ENCODE measurements at regions of chr12 and their contacts with region 1.

Region 1: DNA sequence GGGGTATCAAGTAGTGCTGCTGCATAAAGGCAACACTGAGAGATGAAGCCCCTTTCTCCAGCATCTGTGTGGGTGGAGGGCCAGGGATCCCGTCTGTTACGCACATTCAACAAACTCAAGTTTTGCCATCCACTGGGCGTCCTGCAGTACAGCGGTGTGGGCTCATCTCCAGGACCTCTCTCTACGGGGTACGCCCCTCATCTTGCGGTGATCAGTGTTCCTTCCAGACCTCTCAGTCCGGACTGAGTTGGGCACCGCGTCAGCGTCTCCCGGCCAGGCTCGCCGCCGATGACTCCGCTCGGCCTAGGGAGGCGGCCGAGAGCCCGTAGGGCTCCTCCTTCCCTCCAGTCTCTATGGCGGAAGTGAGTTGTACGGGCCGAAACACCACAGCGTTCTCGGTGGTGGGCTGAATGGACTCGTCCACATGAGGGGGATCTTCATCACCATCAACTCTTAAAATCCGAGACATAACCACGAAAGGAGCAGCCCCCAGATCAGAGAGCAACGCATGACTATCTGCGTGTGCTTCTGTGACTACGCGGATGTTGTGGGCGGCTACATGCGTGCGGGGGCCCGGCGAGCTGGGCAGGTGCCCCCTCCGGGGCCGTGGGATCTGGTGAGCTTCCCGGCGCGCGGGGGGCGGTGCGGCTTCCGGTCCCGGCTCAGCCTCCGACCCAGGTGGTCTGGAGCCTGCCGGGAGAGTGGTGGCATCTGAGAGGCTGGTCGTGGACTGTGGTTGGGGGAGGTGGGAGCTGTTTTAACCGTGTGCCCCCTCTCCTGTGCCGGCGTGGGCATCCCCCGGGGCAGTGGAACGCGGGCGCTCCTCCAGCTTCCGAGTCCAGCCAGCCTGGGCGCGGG is at the start of gene ATG101:
- DNase-seq: peak; percentile 94
- H3K4me3 ChIP-seq: peak within 1 kb of the TSS; percentile 100
- H3K27ac ChIP-seq: peak within 1 kb of the TSS; percentile 93
- H3K27me3 ChIP-seq: no peaks in the 10 kb centered on the region
- CTCF ChIP-seq: peak; percentile 68
- polyA plus RNA-seq, gene ATG101: 97.3 and 112 TPM in 2 replicates

Region 2: GRCh38 chr12:52032804-52033502 is 36.6 kb before region 1 on chr12:
- CTCF ChIA-PET with region 1: interaction called, 624 read pairs
- POLR2A ChIA-PET with region 1: interaction called, 6 read pairs
- DNase-seq: peak; percentile 88
- H3K4me3 ChIP-seq: peak overlapping the region; percentile 53
- H3K27ac ChIP-seq: peak overlapping the region; percentile 82
- H3K27me3 ChIP-seq: no peaks in the 10 kb centered on the region
- CTCF ChIP-seq: no peak

Region 3: GRCh38 chr12:52050761-52051541 is 18.6 kb before region 1 on chr12 and contains the start of gene NR4A1:
- CTCF ChIA-PET with region 1: interaction called, 8 read pairs
- POLR2A ChIA-PET with region 1: interaction called, 17 read pairs
- DNase-seq: peak; percentile 88
- H3K4me3 ChIP-seq: peak within 1 kb of the TSS; percentile 79
- H3K27ac ChIP-seq: peak within 1 kb of the TSS; percentile 98
- H3K27me3 ChIP-seq: no peaks in the 10 kb centered on the region
- CTCF ChIP-seq: no peak
- polyA plus RNA-seq, gene NR4A1: 4.4 and 6.9 TPM in 2 replicates

Region 4: GRCh38 chr12:52058631-52059361 is 10.8 kb before region 1 on chr12:
- CTCF ChIA-PET with region 1: interaction called, 15 read pairs
- POLR2A ChIA-PET with region 1: interaction called, 4 read pairs
- DNase-seq: no peak
- H3K4me3 ChIP-seq: no peak overlapping the region
- H3K27ac ChIP-seq: no peak overlapping the region
- H3K27me3 ChIP-seq: no peaks in the 10 kb centered on the region
- CTCF ChIP-seq: no peak

Region 5: DNA sequence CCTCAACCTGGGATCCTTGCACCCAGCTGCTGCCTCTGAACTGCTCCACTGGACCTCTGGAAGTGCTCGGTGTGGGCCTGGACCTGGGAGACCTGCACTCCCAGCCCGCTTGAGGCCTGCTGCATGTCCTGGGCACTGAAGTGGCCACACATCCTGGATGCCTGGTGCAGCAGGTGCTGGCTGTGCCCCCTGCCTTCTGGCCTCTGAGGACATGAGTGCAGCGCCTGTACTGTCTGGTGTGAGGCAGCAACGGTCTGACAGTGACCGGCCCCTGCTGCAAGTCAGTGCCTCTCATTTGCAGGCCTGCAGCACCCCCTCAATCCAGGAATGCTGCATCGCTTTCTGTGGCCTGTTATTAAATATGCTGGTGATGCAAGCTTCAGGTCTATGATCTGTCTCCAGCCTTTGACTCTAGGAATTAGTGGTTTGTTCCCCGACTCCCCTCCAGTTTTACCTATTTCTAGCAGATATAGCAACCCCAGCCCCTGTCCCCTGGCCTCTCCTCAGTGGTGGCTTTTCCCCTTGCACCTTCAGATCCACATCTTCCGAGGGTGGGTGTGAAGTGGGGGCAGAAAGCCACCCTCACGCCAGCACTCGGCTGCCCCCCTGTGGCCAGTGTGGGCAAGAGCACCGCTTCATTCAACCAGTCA is 13.6 kb after region 1 on chr12:
- CTCF ChIA-PET with region 1: interaction called, 24 read pairs
- POLR2A ChIA-PET with region 1: interaction called, 32 read pairs
- DNase-seq: no peak
- H3K4me3 ChIP-seq: no peak overlapping the region
- H3K27ac ChIP-seq: peak overlapping the region; percentile 85
- H3K27me3 ChIP-seq: peaks cover 5% of the 10 kb centered on the region
- CTCF ChIP-seq: peak; percentile 99

Measured in AG04450 (cell line).